Calu3 (cell line): ENCODE measurements at regions of chr2 and their contacts with region 1.

Region 1: DNA sequence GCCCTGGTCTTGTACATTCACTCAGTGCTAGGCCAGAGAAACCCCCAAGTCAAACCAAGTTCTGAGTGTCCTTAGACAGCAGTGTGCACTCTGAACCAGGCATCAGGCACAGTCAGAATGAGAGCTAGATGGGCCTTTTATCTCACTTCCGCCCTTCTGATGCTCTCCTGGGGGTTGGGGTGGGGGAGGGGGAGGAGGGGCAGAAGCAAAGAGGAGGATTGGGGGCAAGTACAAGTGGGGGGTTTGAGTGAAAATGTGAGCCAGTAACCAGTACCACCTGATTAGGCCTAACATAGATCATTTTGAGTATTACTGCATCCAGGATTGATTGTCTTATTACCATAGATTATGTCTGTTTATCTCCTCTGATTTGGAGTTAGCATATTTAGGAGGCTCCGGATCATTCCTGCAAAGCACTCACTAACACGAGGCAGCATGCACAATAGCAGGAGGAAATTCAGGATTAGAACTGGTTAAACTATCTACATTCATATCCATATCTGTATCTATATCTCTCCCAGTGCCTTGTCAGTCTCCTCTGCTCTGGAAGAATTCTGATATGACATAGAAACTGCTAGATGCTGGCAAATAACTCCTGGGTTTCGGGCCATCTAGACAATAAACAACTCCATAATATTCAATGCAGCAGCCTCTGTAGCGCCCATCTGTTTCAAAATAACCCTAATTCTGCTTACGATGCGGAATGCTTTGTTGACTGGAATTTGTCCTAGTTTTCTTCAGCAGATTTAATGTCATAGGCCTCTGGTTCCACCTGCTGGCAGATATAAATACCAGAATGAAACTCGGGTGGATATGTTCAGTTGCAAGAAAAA is 149.1 kb downstream of the RHBDD1 start:
- DNase-seq: peak; percentile 40
- H3K4me3 Mint-ChIP-seq: no peak overlapping the region
- H3K27ac Mint-ChIP-seq: no peak overlapping the region
- H3K4me1 Mint-ChIP-seq: no peaks in the 10 kb centered on the region
- H3K27me3 Mint-ChIP-seq: no peaks in the 10 kb centered on the region
- CTCF ChIP-seq: peak; percentile 53

Region 2: GRCh38 chr2:226835796-226836547 is 149.0 kb before region 1 on chr2 and contains the start of gene RHBDD1:
- CTCF ChIA-PET with region 1: no interaction called
- intact Hi-C with region 1: loop called (anchors 10 kb)
- DNase-seq: peak; percentile 95
- H3K4me3 Mint-ChIP-seq: peak within 1 kb of the TSS; percentile 98
- H3K27ac Mint-ChIP-seq: peak within 1 kb of the TSS; percentile 98
- H3K4me1 Mint-ChIP-seq: peaks cover 18% of the 10 kb centered on the region
- H3K27me3 Mint-ChIP-seq: no peaks in the 10 kb centered on the region
- CTCF ChIP-seq: no peak
- total RNA-seq, gene RHBDD1: 28.7 and 32.8 TPM in 2 replicates